ENCODE measurements at regions of chr12 and their contacts with region 1.

Region 1: DNA sequence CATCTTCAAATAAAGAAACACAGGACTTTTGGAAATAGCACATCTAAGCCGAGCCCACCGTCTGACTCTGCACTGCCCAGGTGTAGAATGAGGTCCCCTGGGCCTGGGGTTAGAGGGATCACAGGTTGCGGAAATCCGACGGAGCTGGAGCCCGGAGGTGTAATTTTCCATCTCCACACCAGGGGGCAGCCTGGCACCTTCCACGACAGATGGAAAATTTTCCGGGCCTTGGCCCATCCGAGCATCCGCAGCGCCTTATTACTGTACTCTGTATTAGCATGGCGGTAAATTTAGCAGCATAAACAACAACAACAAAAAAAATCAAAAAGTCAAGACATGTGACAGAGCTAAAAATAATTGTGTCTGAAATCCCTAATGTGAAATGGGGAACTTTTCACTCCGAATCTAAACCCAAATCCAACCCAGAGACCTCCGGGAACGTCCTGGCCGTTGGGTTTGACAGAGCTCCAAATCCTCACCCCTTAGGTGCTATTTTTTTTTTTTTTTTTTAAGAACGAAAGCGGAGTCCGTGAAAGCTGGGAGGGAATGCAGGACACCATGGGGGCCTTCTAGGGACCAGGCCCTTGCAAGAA is 93.9 kb downstream of the KSR2 start:
- DNase-seq: peak; percentile 76
- ATAC-seq: peak; percentile 89

Region 2: DNA sequence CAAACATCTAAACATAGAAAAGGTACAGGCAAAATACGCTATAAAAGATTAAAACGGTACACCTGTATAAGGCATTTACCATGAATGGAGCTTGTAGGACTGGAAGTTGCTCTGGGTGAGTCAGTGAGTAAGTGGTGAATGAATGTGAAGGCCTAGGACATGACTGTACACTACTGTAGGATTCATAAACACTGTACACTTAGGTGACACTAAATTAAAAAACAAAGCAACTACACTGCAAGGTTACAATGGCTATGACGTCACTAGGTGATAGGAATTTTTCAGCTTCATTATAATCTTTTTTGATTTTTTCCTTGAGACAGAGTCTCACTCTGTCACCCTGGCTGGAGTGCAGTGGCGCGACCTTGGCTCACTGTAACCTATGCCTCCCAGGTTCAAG is 175.4 kb before region 1 on chr12:
- intact Hi-C with region 1: no loop called
- DNase-seq: no peak
- ATAC-seq: no peak

Region 3: DNA sequence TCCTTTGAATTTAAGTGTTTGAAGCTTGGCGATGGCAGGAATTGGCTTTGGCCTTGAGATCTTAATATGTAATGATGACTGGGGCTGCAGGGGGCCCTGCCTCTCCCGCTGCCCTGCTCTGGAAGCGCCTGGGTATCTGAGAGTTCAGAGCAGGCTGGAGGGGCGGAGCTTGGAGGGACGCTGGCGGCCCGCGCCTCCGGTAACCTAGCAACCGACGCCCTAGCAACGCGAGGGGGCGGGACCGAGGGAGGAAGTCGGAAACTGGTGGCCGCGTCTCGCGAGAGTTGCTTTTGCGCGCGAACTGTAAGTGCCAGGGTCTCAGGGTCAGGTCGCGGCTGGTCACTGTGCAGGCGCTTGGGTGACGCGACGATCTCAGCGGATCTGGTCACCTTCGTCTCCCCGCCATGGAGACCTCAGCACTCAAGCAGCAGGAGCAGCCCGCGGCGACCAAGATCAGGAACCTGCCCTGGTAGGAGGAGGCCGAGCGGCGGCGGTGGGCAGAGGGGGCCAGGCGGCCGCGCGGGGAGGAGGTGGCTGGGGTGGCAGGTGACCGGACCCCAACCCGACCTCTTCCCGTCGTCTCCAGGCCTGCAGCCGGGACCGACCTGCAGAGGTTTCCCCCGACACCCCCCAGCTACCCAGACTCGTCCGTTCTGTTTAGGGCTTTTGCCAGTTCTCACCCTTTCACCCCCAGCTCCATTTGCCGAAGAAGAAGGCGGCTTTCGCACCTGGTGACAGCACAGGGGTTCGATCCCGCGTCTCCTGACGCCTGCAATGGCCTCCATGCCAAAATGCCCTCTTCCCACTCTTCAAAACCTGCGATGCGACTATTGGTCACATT is 141.7 kb after region 1 on chr12 and contains the start of gene RFC5:
- intact Hi-C with region 1: loop called (anchors 10 kb)
- DNase-seq: peak; percentile 99
- ATAC-seq: peak; percentile 100
- total RNA-seq, gene RFC5: 3.5 TPM

Region 4: DNA sequence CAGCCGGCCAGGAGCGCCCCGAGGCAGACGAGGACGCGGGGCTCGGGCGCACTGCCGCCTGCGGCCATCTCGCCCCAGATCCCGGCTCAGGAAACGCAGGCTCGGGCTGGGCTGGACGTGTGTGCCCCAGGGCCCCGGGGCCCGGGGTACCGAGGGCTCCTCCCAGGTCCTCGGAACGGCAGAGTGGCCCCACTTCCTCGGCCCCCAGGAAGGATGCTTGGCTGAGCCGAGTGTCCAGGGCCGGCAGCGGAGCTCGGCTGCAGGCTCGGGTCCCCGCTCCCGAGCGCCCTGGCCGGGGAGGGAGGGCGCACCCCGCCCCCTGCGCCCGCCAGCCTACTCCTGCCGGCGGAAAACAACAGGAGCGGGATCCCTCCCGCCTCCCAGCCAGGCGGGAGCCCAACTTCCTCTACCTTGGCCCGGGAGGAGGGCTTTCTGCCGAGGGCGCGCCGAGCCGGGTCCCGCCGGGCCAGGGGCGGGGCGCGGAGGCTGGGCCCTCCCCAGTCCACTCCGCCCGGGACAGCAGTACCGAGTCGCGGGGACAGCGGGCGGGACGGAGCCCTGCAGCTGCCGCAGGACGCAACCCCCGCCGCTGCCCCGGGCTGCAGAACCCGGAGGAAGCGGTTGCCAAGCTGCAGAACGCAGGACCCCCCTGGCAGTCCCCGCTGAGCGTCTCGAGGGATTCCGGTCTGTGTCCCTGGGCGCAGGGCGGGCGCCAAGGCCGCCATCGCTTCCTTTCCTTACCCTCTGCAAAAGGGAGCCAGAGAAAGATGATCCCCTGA is 228.9 kb after region 1 on chr12 and contains the start of gene VSIG10:
- intact Hi-C with region 1: loop called (anchors 10 kb)
- DNase-seq: peak; percentile 86
- ATAC-seq: peak; percentile 97
- total RNA-seq, gene VSIG10: 12.0 TPM

Region 5: DNA sequence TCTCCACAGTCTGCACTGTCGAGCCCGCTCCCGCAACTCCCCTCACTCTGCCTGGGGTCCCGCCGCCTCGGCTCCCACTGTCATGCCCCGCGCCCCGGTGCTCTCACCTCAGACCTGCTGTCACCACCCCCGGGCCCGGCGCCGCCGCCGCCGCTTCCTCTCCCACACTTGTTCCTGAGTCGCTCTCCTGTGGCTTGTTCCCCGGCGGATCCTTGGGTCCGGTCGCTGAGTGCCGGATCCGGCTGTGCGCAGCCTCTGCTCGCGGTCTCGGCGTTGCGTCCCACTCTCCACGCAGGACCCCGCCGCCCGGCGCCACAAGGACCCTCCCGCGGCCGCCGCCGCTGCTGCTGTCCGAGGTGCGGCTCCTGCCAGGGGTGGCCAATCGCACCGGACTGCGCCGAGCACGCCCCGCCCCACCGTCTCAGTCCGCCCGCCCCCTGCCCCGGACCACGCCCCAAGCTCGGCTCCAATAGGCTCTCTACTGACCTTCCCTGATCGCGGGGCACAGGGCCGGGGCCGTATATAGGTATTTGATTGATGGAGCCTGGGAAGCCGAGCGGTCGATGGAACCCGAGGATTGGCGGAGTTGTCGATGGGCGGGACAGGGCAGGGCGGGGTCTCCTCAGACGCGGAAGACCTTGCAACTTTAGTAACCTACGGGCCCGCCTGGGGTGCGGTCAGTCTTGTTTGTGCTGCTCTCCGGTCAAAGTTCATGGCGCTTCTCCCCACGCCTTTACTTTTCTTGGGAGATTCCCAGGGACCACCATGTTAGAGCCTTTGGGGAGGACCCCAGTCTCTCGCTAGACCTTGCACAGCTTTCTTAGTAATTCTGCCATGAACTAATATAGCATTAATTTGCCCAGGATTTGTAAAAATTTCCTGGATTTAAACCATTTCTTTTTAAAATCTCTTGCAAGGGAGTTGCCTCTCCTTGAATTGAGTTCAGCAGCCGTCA is 497.9 kb after region 1 on chr12 and contains the start of gene TAOK3:
- intact Hi-C with region 1: loop called (anchors 10 kb)
- DNase-seq: peak; percentile 99
- ATAC-seq: peak; percentile 93
- total RNA-seq, gene TAOK3: 21.8 TPM

Measured in Right ventricle myocardium superior (tissue), 1 donor.